ENCODE measurements at regions of chr17 and their contacts with region 1.

Region 1: GRCh38 chr17:77140166-77140878 is 447 bp upstream of the SEC14L1 start:
- DNase-seq: peak; percentile 98 to 99 (median 99)
- H3K4me3 ChIP-seq: peak overlapping the region; percentile 38 to 68
- H3K4me3 Mint-ChIP-seq: peak overlapping the region; percentile 81 to 92 (median 85)
- H3K27ac ChIP-seq: peak overlapping the region; percentile 75
- H3K27ac Mint-ChIP-seq: peak overlapping the region; percentile 78 to 95 (median 93)
- H3K4me1 ChIP-seq: peaks cover 47% of the 10 kb centered on the region
- H3K4me1 Mint-ChIP-seq: peaks cover 28 to 65% (median 49%) of the 10 kb centered on the region in 4 donors
- H3K27me3 ChIP-seq: no peaks in the 10 kb centered on the region
- H3K27me3 Mint-ChIP-seq: no peaks in the 10 kb centered on the region

Region 2: GRCh38 chr17:77127735-77128361 is 12.5 kb before region 1 on chr17:
- CTCF ChIA-PET with region 1: interaction called, 11 read pairs
- POLR2A ChIA-PET with region 1: interaction called, 45 read pairs
- intact Hi-C with region 1: loop called (anchors 1 kb)
- DNase-seq: peak; percentile 82 to 90 (median 85)
- H3K4me3 ChIP-seq: peak overlapping the region; percentile 21 to 23
- H3K4me3 Mint-ChIP-seq: peak overlapping the region; percentile 47 to 86 (median 80)
- H3K27ac ChIP-seq: peak overlapping the region; percentile 54
- H3K27ac Mint-ChIP-seq: peak overlapping the region; percentile 82 to 98 (median 96)
- H3K4me1 ChIP-seq: peaks cover 16% of the 10 kb centered on the region
- H3K4me1 Mint-ChIP-seq: peaks cover 8 to 27% (median 17%) of the 10 kb centered on the region in 4 donors
- H3K27me3 ChIP-seq: no peaks in the 10 kb centered on the region
- H3K27me3 Mint-ChIP-seq: no peaks in the 10 kb centered on the region

Region 3: DNA sequence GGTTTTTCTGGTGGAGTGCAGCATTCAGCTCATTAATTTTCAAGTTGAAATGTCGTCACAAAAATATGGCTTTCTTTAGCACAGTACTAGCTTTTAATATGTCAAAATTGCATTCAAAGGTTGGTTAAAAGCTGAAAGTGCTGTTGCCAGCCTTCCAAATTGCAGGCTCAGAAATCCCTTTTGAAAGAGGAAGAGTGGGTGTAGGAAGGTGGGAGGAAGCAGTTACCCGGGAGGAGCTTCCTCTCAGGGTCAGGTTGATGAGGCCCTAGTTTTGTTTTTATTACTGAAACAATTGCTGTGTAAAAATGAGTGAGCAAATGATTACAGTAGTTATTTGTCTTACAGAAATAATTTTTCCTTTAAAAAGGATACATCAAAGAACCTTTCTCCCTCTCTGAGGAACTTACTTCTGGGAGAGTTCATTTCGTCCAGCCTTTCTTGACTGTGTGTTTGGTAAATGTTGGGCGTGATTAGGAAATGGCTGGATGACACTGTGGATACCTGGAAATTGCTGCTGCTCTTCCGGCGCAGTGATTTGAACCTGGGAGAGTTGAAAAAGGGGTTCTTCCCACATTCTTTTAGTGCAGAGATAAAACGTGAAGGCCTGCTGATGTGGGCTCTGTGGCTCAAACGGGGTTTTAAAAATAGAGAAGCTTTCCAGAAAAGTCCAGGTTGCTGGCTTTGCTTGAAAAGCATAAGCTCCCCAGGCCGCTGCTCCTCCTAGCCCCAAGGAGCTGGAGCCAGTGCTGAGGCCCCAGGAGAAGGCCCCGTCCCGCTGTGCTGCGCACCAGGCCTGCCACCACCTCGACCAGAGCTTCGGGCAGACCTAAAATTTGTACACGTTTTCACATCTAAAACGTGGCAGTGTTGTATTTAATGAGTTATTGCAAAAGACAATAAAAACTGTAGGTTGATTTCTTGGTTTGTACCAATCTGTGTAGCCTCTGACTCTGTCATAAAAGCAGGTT is 42.2 kb after region 1 on chr17:
- CTCF ChIA-PET with region 1: interaction called, 4 read pairs
- POLR2A ChIA-PET with region 1: interaction called, 10 read pairs
- intact Hi-C with region 1: no loop called
- DNase-seq: peak in 1 of 5 donors; percentile 10
- H3K4me3 ChIP-seq: peak overlapping the region; percentile 7 to 21
- H3K4me3 Mint-ChIP-seq: peak overlapping the region; percentile 48 to 91 (median 77)
- H3K27ac ChIP-seq: peak overlapping the region; percentile 7
- H3K27ac Mint-ChIP-seq: peak overlapping the region in 6 of 7 donors; percentile 92 to 96 (median 94)
- H3K4me1 ChIP-seq: peaks cover 52% of the 10 kb centered on the region
- H3K4me1 Mint-ChIP-seq: peaks cover 11 to 25% (median 18%) of the 10 kb centered on the region in 4 donors
- H3K27me3 ChIP-seq: no peaks in the 10 kb centered on the region
- H3K27me3 Mint-ChIP-seq: no peaks in the 10 kb centered on the region

Measured in CD4-positive, alpha-beta memory T cell (primary cell).